Left ventricle myocardium superior (tissue), 1 donor: ENCODE measurements at regions of chr10 and their contacts with region 1.

Region 1: GRCh38 chr10:122435212-122435827 is 19.1 kb upstream of the ARMS2 start:
- DNase-seq: no peak
- ATAC-seq: peak; percentile 41

Region 2: GRCh38 chr10:122112625-122113160 is 322.6 kb before region 1 on chr10:
- intact Hi-C with region 1: no loop called
- DNase-seq: peak; percentile 91
- ATAC-seq: peak; percentile 88

Region 3: DNA sequence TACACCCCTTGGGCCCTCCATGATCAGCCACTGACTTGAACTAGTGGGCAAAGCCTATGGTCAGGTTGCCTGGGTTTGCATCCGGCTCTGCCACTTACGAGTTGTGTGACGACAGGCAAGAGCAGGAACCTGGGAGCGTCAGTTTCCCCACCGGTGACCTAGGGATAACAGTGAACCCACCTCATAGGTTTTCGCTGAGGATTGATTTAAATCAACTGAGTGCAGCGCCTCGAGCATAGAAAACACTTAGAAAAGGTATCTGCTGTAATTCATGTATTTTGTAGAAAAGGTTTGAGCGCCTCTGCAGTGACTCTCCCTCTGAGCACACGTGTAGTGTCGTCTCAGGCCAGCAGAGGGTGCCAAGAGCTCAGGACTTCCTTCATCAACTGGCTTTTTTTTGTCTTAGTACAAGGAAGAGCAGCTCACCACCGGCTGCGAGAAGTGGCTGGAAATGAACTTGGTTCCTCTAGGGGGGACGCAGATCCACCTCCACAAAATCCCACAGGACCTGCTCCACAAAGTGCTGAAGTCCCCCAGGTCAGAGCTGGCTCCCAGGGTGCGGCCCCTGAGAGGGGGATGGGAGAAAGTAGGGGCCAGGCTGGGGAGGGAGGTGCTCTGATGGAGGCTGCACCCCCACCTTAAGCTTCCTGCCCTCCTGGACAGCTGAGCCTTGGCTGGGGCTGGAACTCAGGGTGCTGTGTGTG is 136.6 kb before region 1 on chr10:
- intact Hi-C with region 1: loop called (anchors 2 kb)
- DNase-seq: peak; percentile 80
- ATAC-seq: peak; percentile 90

Region 4: GRCh38 chr10:122342293-122343134 is 92.8 kb before region 1 on chr10:
- intact Hi-C with region 1: loop called (anchors 10 kb)
- DNase-seq: no peak
- ATAC-seq: peak; percentile 42

Region 5: DNA sequence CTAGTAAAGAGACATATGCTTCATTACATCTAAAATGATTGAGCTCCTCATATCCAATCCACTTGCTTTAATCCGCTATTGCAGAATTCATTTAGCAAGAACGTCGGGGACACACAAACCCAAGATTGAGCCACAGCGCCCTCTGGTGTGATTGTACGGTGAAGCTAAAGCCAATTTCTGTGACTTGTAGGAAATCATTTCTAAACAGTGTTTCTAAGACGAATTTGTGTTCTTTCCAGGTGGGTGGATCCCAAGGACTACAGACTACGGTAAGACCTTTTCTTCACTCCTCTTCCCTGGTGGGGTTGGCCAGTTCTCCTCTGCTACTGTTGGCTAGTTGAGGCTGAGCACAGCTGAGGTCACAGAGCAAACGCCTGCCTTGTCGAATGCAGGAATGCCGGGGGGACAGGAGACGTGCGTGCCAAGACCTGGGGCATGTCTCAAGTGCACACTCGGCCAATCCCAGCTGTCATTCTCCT is 130.4 kb after region 1 on chr10:
- intact Hi-C with region 1: loop called (anchors 5 kb)
- DNase-seq: peak; percentile 85
- ATAC-seq: peak; percentile 74

Region 6: GRCh38 chr10:122703439-122704118 is 268.3 kb after region 1 on chr10:
- intact Hi-C with region 1: loop called (anchors 10 kb)
- DNase-seq: peak; percentile 83
- ATAC-seq: peak; percentile 97